ENCODE measurements at regions of chr20 and their contacts with region 1.

Region 1: GRCh38 chr20:50385733-50386640 is 124.2 kb upstream of the PTPN1 start:
- DNase-seq: peak; percentile 77
- H3K4me3 Mint-ChIP-seq: peak overlapping the region; percentile 57
- H3K27ac Mint-ChIP-seq: peak overlapping the region; percentile 90
- H3K4me1 Mint-ChIP-seq: peaks cover 76% of the 10 kb centered on the region
- H3K27me3 Mint-ChIP-seq: peaks cover 3% of the 10 kb centered on the region

Region 2: GRCh38 chr20:50286609-50287008 is 99.4 kb before region 1 on chr20:
- intact Hi-C with region 1: loop called (anchors 5 kb)
- DNase-seq: no peak
- H3K4me3 Mint-ChIP-seq: no peak overlapping the region
- H3K27ac Mint-ChIP-seq: no peak overlapping the region
- H3K4me1 Mint-ChIP-seq: peaks cover 31% of the 10 kb centered on the region
- H3K27me3 Mint-ChIP-seq: peaks cover 3% of the 10 kb centered on the region

Region 3: GRCh38 chr20:50460460-50461267 is 74.7 kb after region 1 on chr20:
- intact Hi-C with region 1: loop called (anchors 5 kb)
- DNase-seq: peak; percentile 76
- H3K4me3 Mint-ChIP-seq: no peak overlapping the region
- H3K27ac Mint-ChIP-seq: no peak overlapping the region
- H3K4me1 Mint-ChIP-seq: peaks cover 25% of the 10 kb centered on the region
- H3K27me3 Mint-ChIP-seq: peaks cover 4% of the 10 kb centered on the region

Measured in activated T-helper 1 cell treated with anti-CD3 and anti-CD28 coated beads, Interleukin-12 subunit alpha, Interleukin-12 subunit beta, Interleukin-2, Interleukin-4 antibody, amounts not matched to agents 30 ng/mL and 10 ng/mL and 1 ng/mL, durations not matched to agents 14 hours and 24 hours and 36 hours (primary cell).